ENCODE measurements at regions of chr12 and their contacts with region 1.

Region 1: DNA sequence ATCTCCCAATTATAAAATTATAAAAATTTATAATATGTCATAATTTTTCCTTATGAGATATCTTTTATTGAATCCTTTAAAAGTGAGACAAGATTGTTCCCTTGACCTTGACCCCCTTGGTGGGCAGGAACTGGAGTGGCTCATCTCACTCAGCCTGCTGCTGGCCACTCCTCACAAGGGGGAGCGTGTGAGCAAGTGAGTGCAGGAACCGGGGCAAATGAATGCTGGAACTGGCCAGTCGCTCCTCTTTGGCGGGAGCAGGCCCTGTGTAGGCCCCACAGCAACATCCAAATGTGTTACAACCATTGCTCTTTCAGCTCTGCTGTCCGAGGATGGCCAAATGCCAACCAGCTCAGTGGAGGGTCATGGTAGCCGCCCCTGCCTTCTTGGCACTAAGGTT is 178.8 kb downstream of the ETNK1 start:
- DNase-seq: no peak
- H3K4me3 ChIP-seq: no peak overlapping the region
- H3K27ac ChIP-seq: no peak overlapping the region
- H3K4me1 ChIP-seq: no peaks in the 10 kb centered on the region
- H3K27me3 ChIP-seq: peaks cover 9% of the 10 kb centered on the region; the same call in 1 of the 2 replicates
- CTCF ChIP-seq: no peak

Region 2: GRCh38 chr12:22692964-22693555 is 110.7 kb before region 1 on chr12:
- CTCF ChIA-PET with region 1: no interaction called
- POLR2A ChIA-PET with region 1: no interaction called
- intact Hi-C with region 1: no loop called
- DNase-seq: no peak
- H3K4me3 ChIP-seq: no peak overlapping the region
- H3K27ac ChIP-seq: no peak overlapping the region
- H3K4me1 ChIP-seq: no peaks in the 10 kb centered on the region
- H3K27me3 ChIP-seq: no peaks in the 10 kb centered on the region
- CTCF ChIP-seq: no peak

Region 3: DNA sequence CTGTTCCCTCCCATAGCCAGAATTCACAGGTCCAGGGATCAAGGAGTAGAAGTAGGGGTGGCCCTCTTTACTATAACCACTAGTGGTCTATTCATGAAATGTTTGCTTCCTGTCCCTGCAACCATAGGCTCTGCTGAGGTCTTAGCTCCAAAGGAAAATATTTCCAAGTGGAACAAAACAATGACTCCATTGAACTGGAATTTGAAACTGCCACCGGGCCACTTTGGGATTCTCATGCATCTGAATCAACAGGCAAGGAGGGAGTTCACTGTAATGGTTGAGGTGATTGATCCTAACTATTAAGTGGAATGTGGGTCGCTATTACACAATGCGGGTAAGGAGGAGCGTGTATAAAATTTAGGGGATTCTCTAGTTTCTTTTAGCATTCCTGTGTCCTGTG is 18.3 kb after region 1 on chr12:
- CTCF ChIA-PET with region 1: no interaction called
- POLR2A ChIA-PET with region 1: no interaction called
- intact Hi-C with region 1: loop called (anchors 1 kb)
- DNase-seq: no peak
- H3K4me3 ChIP-seq: no peak overlapping the region
- H3K27ac ChIP-seq: no peak overlapping the region
- H3K4me1 ChIP-seq: no peaks in the 10 kb centered on the region
- H3K27me3 ChIP-seq: no peaks in the 10 kb centered on the region
- CTCF ChIP-seq: no peak

Measured in PC-9 (cell line).